Activated CD4-positive, alpha-beta memory T cell treated with anti-CD3 and anti-CD28 coated beads, Interleukin-2, amount 10 ng/mL, durations not matched to agents 7 days and 5 days (primary cell): ENCODE measurements at regions of chr1 and their contacts with region 1.

Region 1: DNA sequence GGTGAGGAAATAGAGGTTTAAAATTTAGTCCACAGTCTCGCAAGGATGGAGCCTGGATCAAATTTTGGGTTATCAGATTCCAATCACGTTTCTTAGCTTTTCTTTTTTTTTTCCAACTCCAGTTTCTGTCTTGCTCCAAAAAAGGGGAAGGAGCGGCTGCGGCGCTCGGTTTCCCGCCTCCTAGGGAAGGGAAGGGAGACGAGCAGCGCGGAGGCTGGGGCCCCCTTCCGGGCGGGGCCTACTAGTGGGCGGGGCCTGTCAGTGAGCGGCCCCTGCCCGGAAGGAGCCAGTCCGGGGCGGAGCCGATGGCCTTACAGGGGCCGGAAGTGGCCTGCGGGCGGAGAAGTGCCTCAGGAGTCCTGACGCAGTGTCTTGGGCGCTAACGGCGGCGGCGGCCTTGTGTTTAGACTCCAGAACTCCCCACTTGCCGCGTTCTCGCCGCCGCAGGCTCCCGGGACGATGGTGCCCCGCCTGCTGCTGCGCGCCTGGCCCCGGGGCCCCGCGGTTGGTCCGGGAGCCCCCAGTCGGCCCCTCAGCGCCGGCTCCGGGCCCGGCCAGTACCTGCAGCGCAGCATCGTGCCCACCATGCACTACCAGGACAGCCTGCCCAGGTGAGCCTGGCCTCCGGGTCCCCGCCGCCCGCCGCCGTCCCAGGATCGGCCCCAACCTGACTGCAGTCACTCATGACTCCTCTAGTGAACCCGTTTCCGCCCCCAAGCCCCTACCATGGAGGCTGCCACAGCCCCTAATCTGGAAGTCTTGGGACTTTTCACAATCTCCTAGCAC is at the start of gene CPT2:
- DNase-seq: peak; percentile 96
- H3K4me3 Mint-ChIP-seq: peak within 1 kb of the TSS; percentile 98
- H3K27ac Mint-ChIP-seq: peak within 1 kb of the TSS; percentile 97
- H3K4me1 Mint-ChIP-seq: peaks cover 26% of the 10 kb centered on the region
- H3K27me3 Mint-ChIP-seq: no peaks in the 10 kb centered on the region
- total RNA-seq, gene CPT2: 13.9 to 14.9 TPM

Region 2: DNA sequence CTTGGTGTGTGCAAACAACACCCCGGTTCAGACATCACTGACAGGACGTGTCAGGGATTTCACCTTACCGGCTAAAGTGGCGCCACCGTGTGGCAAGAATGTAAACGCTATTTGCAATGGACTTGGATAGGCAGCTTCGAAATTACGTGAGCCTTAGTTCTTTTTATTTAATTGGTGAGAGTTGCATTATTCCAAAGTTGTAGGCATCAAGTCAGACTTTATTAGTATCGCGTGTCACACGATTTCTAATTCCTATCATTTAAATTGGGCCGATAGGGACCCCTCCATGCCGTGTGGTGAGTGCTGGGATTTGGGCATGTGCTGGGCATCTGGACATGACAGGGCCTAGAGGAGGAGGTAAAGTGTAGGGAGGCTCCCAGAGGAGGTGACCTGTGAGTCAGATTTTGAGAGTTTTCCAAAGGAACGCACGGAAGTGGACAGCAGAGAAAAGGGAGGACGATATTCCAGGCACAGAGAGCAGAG is 14.5 kb before region 1 on chr1:
- CTCF ChIA-PET with region 1: interaction called, 17 read pairs
- POLR2A ChIA-PET with region 1: interaction called, 7 read pairs
- DNase-seq: peak; percentile 86
- H3K4me3 Mint-ChIP-seq: no peak overlapping the region
- H3K27ac Mint-ChIP-seq: no peak overlapping the region
- H3K4me1 Mint-ChIP-seq: no peaks in the 10 kb centered on the region
- H3K27me3 Mint-ChIP-seq: peaks cover 12% of the 10 kb centered on the region